H1 (cell line): ENCODE measurements at regions of chr16 and their contacts with region 1.

Region 1: DNA sequence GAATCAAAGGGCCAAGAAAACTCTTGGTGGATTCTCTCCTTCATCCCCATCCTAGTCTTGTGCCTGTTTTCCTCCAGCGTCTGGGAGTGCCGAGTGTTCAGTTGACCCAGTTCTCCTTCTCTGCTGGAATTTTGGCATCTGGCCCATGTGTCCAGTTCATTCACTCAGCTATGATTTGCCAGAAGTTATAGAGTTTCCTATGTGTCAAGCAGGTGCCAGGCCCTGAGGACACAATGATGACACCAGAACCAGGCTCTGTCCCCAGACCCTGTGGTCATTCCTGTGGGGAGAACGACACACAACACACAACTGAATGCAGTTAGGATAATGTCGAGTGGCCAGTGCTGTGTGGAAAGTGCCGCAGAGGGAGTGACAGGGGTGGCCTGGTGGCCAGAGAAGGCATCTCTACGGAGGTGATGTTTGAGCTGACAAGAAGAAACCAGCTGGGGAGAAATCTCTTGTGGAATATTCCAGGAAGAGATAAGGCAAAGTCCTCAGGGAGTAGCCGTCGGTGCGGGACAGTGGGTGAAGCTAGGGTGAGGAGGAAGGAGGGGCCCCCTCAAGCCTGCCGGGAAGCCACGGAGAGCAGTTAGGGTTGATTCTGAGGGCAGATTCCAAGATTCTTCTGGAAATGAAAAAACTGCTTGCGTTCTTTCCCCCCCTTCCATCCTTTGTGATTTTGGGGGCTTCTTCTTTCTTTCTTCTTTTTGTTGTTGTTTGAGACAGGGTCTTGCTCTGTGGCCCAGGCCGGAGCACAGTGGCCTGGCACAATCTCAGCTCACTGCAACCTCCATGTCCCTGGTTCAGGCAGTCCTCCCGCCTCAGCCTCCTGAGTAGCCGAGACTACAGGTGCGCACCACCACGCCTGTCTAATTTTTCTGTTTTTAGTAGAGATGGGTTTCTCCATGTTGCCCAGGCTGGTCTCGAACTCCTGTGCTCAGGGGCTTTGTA is 35.8 kb upstream of the IL34 start:
- DNase-seq: no peak
- H3K4me3 ChIP-seq: no peak overlapping the region
- H3K27ac ChIP-seq: no peak overlapping the region
- H3K4me1 ChIP-seq: peaks cover 0 to 3% (median 0%) of the 10 kb centered on the region in 4 experiments; a peak in 2 of 7 replicates
- H3K27me3 ChIP-seq: no peaks in the 10 kb centered on the region
- CTCF ChIP-seq: no peak
- EP300 ChIP-seq: no peak
- POLR2A ChIP-seq: no peak
- RAD21 ChIP-seq: no peak

Region 2: DNA sequence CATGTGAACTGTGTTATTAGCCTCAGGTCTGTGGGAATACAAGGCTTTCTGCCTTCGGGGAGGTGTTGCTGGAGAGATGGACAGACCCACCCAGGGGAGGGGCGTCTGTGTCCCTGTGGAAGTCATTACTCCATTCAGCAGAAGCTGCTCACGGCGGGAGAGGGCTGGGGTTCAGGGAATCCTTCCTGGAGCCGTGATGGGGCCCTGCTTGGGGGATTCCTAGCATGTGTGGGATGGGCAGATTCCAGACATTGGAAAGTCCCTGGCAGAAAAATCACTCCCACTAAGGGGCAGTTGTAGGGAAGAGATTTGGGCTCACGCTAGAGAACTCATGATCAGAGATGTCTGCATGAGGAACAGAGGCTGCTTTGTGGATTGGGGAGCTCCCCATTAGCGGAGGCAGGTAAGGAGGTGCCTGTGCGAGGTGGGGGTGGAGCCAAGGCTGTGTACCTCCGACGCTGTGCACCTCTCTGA is 20.5 kb before region 1 on chr16:
- CTCF ChIA-PET with region 1: interaction called, 5 read pairs
- POLR2A ChIA-PET with region 1: interaction called, 36 read pairs
- DNase-seq: no peak
- H3K4me3 ChIP-seq: no peak overlapping the region
- H3K27ac ChIP-seq: no peak overlapping the region
- H3K4me1 ChIP-seq: peaks cover 2 to 7% (median 3%) of the 10 kb centered on the region in 4 experiments; a peak in 4 of 7 replicates
- H3K27me3 ChIP-seq: no peaks in the 10 kb centered on the region
- CTCF ChIP-seq: no peak
- EP300 ChIP-seq: no peak
- POLR2A ChIP-seq: no peak
- RAD21 ChIP-seq: no peak

Region 3: GRCh38 chr16:70632273-70632672 is 21.7 kb after region 1 on chr16:
- CTCF ChIA-PET with region 1: interaction called, 13 read pairs
- POLR2A ChIA-PET with region 1: interaction called, 12 read pairs
- DNase-seq: no peak
- H3K4me3 ChIP-seq: no peak overlapping the region
- H3K27ac ChIP-seq: no peak overlapping the region
- H3K4me1 ChIP-seq: peaks cover 0 to 2% (median 0%) of the 10 kb centered on the region in 4 experiments; a peak in 1 of 7 replicates
- H3K27me3 ChIP-seq: no peaks in the 10 kb centered on the region
- CTCF ChIP-seq: no peak
- EP300 ChIP-seq: no peak
- POLR2A ChIP-seq: no peak
- RAD21 ChIP-seq: no peak

Region 4: DNA sequence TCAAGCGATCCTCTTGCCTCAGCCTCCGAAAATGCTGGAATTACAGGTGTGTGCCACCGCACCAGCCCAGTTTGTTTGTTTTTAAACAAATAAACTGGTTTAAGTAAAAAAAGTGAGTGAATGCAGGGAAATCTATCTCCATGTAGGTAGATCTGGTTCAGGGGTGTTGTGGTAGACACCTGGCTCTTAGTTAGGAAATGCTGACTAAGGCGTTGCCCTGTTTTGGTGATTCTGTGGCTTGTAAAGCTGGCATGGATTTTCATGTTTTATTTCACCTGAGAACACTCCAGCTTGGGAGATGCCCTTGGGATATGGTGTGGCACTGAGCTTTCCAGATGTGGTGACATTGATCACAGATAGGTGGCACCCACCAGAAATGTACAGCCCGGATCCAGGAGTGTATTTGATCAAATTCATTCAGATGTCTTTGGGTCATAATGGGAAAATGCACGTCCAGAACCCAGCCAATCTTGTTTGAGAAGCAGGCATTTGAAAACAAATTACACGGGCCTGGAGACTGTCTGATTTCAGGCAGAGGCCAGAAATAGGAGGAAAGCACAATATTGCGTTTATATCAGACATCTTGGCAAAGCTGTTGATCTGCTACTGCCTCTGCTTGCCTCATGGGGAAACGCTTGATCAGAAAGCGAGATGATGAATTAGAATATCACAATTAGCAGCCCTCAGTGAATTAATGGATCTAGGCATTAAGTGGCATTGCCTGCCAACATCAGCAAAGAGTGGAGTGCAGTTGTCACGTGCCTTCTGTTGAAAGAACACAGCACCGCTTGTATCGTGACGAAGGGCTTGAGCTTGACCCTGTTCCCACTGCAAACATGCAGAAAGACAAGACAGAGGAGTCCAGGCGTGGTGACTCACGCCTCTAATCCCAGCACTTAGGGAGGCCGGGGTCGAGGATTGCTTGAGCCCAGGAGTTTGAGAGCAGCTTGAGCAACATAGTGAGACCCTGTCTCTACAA is 28.6 kb after region 1 on chr16:
- CTCF ChIA-PET with region 1: no interaction called
- POLR2A ChIA-PET with region 1: interaction called, 12 read pairs
- DNase-seq: no peak
- H3K4me3 ChIP-seq: no peak overlapping the region
- H3K27ac ChIP-seq: no peak overlapping the region
- H3K4me1 ChIP-seq: peaks cover 0 to 2% (median 0%) of the 10 kb centered on the region in 4 experiments; a peak in 1 of 7 replicates
- H3K27me3 ChIP-seq: no peaks in the 10 kb centered on the region
- CTCF ChIP-seq: peak in 1 of 3 experiments; percentile 3; a peak in 1 of 4 replicates
- EP300 ChIP-seq: no peak
- POLR2A ChIP-seq: no peak
- RAD21 ChIP-seq: no peak

Region 5: GRCh38 chr16:70646260-70647241 is 36.0 kb after region 1 on chr16 and contains the start of gene IL34:
- CTCF ChIA-PET with region 1: interaction called, 5 read pairs
- POLR2A ChIA-PET with region 1: interaction called, 59 read pairs
- DNase-seq: no peak
- H3K4me3 ChIP-seq: no peak within 1 kb of the TSS
- H3K27ac ChIP-seq: no peak within 1 kb of the TSS; the same call in 1 of the 2 replicates
- H3K4me1 ChIP-seq: peaks cover 0 to 3% (median 0%) of the 10 kb centered on the region in 4 experiments; a peak in 1 of 7 replicates
- H3K27me3 ChIP-seq: no peaks in the 10 kb centered on the region
- CTCF ChIP-seq: no peak
- EP300 ChIP-seq: no peak
- POLR2A ChIP-seq: no peak
- RAD21 ChIP-seq: no peak
- total RNA-seq, gene IL34: 4.0 and 4.6 TPM in 2 replicates